ENCODE measurements at regions of chr6 and their contacts with region 1.

Region 1: DNA sequence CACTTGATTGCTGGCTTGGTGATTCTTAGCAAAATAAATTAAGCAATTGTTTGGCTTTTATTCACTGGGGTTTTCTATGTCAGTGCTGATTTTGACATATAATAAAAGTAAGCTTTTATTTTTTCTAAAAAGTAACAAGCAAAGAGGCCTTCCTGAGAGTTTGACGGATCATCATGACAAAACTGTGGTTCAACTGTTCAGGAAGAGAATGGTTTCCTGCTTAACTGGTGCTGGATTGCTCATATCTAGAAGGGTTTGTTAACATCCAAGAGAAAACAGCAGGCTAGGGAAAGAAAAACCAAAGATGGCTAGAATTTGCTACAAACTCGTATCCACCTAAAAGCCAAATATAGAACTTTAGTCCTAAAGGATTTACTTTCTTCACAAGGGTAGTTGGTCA is 21.2 kb downstream of the SERPINB1 start:
- DNase-seq: no peak
- H3K4me3 ChIP-seq: no peak overlapping the region
- CTCF ChIP-seq: no peak

Region 2: DNA sequence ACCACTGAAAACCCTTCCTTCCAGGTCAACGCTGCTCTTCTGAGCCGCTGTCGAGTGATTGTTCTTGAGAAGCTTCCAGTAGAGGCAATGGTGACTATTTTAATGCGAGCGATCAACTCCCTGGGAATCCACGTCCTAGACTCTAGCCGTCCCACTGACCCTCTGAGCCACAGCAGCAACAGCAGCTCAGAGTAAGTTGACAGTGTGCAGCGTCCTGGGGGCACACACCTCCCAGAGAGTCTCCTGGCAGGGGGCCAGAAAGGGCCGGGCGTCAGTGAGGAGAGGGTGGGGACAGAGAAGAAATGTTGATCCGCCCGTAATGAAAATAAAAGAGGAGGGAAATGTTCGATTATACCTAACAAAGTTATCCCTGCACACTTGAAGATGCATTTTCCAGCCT is 50.2 kb before region 1 on chr6:
- in situ Hi-C with region 1: loop called (anchors 10 kb)
- DNase-seq: no peak
- H3K4me3 ChIP-seq: no peak overlapping the region
- CTCF ChIP-seq: no peak